ENCODE measurements at regions of chr9 and their contacts with region 1.

Region 1: GRCh38 chr9:125758986-125759763 is 12.0 kb downstream of the PBX3 start:
- H3K4me3 Mint-ChIP-seq: peak overlapping the region; percentile 74
- H3K27ac Mint-ChIP-seq: peak overlapping the region; percentile 90
- H3K4me1 Mint-ChIP-seq: peaks cover 31% of the 10 kb centered on the region
- H3K27me3 Mint-ChIP-seq: no peaks in the 10 kb centered on the region

Region 2: DNA sequence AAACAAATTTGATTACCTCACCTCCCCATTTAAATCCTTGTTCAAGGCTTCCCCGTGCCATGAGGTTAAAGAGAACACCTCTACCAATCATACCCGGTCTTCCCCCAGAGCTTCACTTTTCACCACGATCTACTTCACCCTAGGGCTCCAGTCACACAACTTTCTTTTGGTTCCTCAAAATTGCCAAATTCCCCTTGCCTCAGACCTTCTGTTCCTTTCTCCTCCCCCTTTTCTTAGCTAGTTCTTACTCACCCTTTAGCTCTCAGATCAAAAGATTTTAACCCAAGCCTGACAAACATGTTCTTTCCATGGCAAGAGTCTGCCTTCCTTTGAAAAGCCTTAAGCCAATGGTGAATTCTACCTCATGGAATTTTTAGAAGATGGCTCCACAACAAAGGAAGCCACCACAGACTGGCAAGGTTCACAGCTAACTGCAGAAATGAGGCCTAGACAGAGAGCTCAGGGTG is 108.9 kb before region 1 on chr9:
- intact Hi-C with region 1: loop called (anchors 5 kb)
- H3K4me3 Mint-ChIP-seq: peak overlapping the region; percentile 63
- H3K27ac Mint-ChIP-seq: peak overlapping the region; percentile 90
- H3K4me1 Mint-ChIP-seq: peaks cover 79% of the 10 kb centered on the region
- H3K27me3 Mint-ChIP-seq: no peaks in the 10 kb centered on the region

Region 3: DNA sequence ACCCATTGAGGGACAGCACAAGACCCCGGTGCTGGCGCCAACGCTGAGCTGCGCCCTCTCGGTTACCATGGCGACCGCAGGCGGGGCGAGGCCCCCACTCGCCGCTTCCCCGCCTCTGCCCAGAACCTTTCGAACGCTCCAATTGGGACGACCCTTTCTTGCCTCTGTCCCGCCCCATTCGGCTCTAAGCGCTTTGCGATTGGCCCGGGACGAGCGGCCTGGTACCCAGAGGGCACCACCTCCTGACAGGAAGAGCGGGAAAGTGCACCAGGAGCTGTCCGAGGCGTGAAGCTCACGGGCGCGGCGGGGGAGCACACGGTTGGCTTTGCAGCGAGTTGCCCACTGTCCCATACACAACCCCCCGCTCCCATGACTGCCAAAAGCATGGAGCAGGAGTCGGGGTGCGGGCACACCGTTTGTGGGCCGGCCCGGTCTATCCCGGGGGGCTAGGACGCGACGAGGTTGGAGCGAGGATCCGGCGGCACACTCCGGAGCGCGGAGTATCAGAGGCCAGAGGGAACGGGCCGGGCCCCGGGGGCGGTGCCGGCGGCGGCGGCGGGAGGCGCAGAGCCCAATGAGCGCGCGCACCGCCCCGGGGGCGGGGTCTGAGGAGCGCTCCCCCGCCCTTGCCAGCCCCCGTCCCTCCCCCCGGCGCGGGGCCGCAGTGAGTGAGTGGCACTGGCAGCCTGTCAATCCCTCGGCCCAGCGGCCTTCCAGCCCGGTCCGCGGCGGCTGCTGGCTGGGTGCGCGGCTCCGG is 13.0 kb before region 1 on chr9:
- intact Hi-C with region 1: loop called (anchors 1 kb)
- H3K4me3 Mint-ChIP-seq: peak overlapping the region; percentile 88
- H3K27ac Mint-ChIP-seq: peak overlapping the region; percentile 88
- H3K4me1 Mint-ChIP-seq: peaks cover 39% of the 10 kb centered on the region
- H3K27me3 Mint-ChIP-seq: peaks cover 7% of the 10 kb centered on the region

Measured in dendritic cell treated with granulocyte-macrophage colony-stimulating factor and Interleukin-4, amounts not matched to agents 40 ng/mL and 50 ng/mL, for 4 days (primary cell).